ENCODE measurements at regions of chr5 and their contacts with region 1.

Region 1: GRCh38 chr5:58447226-58447625 is 12.7 kb downstream of the PLK2 start:
- DNase-seq: no peak
- H3K4me3 ChIP-seq: no peak overlapping the region
- H3K27ac ChIP-seq: no peak overlapping the region; the same call in 1 of the 2 replicates
- H3K4me1 ChIP-seq: peaks cover 6% of the 10 kb centered on the region; the same call in 1 of the 2 replicates
- H3K27me3 ChIP-seq: no peaks in the 10 kb centered on the region
- CTCF ChIP-seq: no peak

Region 2: GRCh38 chr5:58348996-58349961 is 97.9 kb before region 1 on chr5:
- CTCF ChIA-PET with region 1: no interaction called
- POLR2A ChIA-PET with region 1: no interaction called
- intact Hi-C with region 1: loop called (anchors 5 kb)
- DNase-seq: no peak
- H3K4me3 ChIP-seq: no peak overlapping the region
- H3K27ac ChIP-seq: no peak overlapping the region
- H3K4me1 ChIP-seq: peaks cover 9% of the 10 kb centered on the region; the same call in 1 of the 2 replicates
- H3K27me3 ChIP-seq: no peaks in the 10 kb centered on the region
- CTCF ChIP-seq: no peak

Measured in PC-9 (cell line).